Esophagus muscularis mucosa (tissue), 4 donors: ENCODE measurements at regions of chr13 and their contacts with region 1.

Region 1: GRCh38 chr13:46831588-46832194 is 34.7 kb upstream of the ESD start:
- DNase-seq: no peak
- H3K4me3 ChIP-seq: no peak overlapping the region
- H3K27ac ChIP-seq: no peak overlapping the region
- H3K4me1 ChIP-seq: no peaks in the 10 kb centered on the region
- H3K27me3 ChIP-seq: no peaks in the 10 kb centered on the region
- CTCF ChIP-seq: peak; percentile 66 to 76 (median 72)
- EP300 ChIP-seq: no peak
- POLR2A ChIP-seq: no peak

Region 2: DNA sequence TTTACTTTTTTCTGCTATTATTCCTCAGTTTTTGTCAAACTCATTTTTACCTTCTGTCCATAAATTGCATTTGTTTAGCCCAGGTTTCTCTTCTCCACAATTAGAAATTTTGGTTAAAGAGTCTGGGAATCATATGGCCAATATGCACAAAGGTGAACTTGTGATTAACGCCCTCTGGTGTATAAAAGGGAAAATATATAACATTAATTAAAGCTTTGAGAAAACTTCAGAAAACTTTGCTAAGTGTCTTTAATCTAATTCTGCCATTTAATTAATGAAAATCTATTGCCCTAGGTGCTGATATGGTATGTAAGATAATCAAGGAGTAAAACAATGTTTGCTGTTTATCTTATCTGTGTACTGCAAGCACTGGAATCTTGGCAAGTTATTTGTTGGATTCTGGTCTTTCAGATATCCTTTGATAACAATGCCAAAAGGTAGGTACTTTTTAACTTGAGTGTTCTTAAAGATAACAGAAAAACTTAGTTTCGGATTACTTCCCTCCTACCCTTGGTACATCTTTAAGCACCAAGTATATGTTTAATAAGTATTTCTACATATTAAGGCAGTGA is 766.7 kb after region 1 on chr13:
- intact Hi-C with region 1: loop called (anchors 5 kb)
- DNase-seq: no peak
- H3K4me3 ChIP-seq: no peak overlapping the region
- H3K27ac ChIP-seq: no peak overlapping the region
- H3K4me1 ChIP-seq: no peaks in the 10 kb centered on the region
- H3K27me3 ChIP-seq: no peaks in the 10 kb centered on the region
- CTCF ChIP-seq: peak in 1 of 3 experiments; percentile 21
- EP300 ChIP-seq: no peak
- POLR2A ChIP-seq: no peak

Region 3: DNA sequence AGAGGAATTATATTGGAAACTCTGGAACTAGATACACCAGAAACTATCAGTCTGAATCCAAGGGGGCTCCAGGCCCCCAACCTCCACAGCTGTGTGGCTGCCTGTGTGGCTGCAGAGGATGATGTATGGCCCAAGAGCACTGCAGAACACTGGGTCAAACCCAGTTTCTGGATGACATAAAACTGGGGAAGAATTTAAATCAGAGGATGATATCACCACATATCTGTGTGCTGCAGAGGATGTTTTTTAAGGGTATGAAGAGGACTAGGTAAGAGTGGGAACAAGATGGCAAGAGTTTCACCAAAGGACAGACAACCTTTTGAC is 942.9 kb after region 1 on chr13:
- intact Hi-C with region 1: loop called (anchors 5 kb)
- DNase-seq: no peak
- H3K4me3 ChIP-seq: no peak overlapping the region
- H3K27ac ChIP-seq: no peak overlapping the region
- H3K4me1 ChIP-seq: no peaks in the 10 kb centered on the region
- H3K27me3 ChIP-seq: no peaks in the 10 kb centered on the region
- CTCF ChIP-seq: no peak
- EP300 ChIP-seq: no peak
- POLR2A ChIP-seq: no peak